ENCODE measurements at regions of chr10 and their contacts with region 1.

Region 1: GRCh38 chr10:84333864-84334451 is 5.6 kb downstream of the CCSER2 start:
- DNase-seq: peak; percentile 61 to 93
- ATAC-seq: peak; percentile 73 to 88 (median 79)
- H3K4me3 ChIP-seq: no peak overlapping the region
- H3K4me3 Mint-ChIP-seq: peak overlapping the region; percentile 72
- H3K27ac ChIP-seq: peak overlapping the region; percentile 90
- H3K27ac Mint-ChIP-seq: peak overlapping the region in 1 of 2 donors; percentile 92
- H3K4me1 ChIP-seq: peaks cover 40% of the 10 kb centered on the region
- H3K4me1 Mint-ChIP-seq: peaks cover 36 to 50% of the 10 kb centered on the region in 2 donors
- H3K27me3 ChIP-seq: no peaks in the 10 kb centered on the region
- H3K27me3 Mint-ChIP-seq: no peaks in the 10 kb centered on the region
- CTCF ChIP-seq: no peak

Region 2: GRCh38 chr10:84139126-84140035 is 194.6 kb before region 1 on chr10 and contains the start of gene GHITM:
- intact Hi-C with region 1: loop called (anchors 2 kb)
- DNase-seq: peak; percentile 99 to 100
- ATAC-seq: peak; percentile 91 to 98 (median 93)
- H3K4me3 ChIP-seq: peak within 1 kb of the TSS; percentile 81
- H3K4me3 Mint-ChIP-seq: peak within 1 kb of the TSS; percentile 95
- H3K27ac ChIP-seq: peak within 1 kb of the TSS; percentile 94
- H3K27ac Mint-ChIP-seq: peak within 1 kb of the TSS; percentile 98
- H3K4me1 ChIP-seq: peaks cover 13% of the 10 kb centered on the region
- H3K4me1 Mint-ChIP-seq: peaks cover 31 to 32% of the 10 kb centered on the region in 2 donors
- H3K27me3 ChIP-seq: no peaks in the 10 kb centered on the region
- H3K27me3 Mint-ChIP-seq: peaks cover 14 to 16% of the 10 kb centered on the region in 2 donors
- CTCF ChIP-seq: peak; percentile 37
- total RNA-seq, gene GHITM: 84.3 to 89.3 (median 87.9) TPM

Region 3: DNA sequence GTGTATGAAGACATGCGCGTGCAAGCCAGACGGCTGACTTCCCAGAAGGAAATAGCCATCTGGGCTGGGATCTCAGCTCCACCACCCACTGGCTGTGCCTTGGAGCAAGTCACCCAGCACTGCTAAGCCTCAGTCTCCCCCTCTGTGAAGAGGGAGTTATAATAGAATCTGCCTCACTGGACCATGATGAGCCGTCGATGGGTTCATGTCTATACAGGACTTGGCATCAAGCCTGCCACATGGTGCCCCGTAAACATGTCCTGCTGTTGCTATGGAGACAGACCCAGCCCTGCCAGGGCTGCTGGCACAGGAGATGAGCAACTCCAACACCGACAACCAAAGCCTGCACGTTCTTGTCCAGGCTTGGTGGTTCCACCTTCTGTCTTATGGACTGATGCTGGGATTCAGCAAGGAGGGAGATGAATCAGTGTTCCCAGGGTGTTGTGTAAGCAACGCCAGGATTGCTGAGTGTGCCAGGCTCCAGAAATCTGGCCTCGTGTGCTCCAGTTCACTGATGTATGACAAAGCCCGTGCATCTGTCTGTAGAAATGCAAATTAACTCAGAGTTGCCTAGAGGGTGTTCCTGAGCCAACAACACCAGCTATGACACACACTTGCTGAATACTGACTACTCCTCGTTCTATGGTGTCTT is 154.8 kb before region 1 on chr10:
- intact Hi-C with region 1: loop called (anchors 5 kb)
- DNase-seq: peak; percentile 22 to 67
- ATAC-seq: peak in 2 of 3 donors; percentile 38 to 41
- H3K4me3 ChIP-seq: no peak overlapping the region
- H3K4me3 Mint-ChIP-seq: no peak overlapping the region
- H3K27ac ChIP-seq: peak overlapping the region; percentile 67
- H3K27ac Mint-ChIP-seq: no peak overlapping the region
- H3K4me1 ChIP-seq: peaks cover 46% of the 10 kb centered on the region
- H3K4me1 Mint-ChIP-seq: peaks cover 0 to 7% of the 10 kb centered on the region in 2 donors
- H3K27me3 ChIP-seq: no peaks in the 10 kb centered on the region
- H3K27me3 Mint-ChIP-seq: no peaks in the 10 kb centered on the region
- CTCF ChIP-seq: no peak

Region 4: DNA sequence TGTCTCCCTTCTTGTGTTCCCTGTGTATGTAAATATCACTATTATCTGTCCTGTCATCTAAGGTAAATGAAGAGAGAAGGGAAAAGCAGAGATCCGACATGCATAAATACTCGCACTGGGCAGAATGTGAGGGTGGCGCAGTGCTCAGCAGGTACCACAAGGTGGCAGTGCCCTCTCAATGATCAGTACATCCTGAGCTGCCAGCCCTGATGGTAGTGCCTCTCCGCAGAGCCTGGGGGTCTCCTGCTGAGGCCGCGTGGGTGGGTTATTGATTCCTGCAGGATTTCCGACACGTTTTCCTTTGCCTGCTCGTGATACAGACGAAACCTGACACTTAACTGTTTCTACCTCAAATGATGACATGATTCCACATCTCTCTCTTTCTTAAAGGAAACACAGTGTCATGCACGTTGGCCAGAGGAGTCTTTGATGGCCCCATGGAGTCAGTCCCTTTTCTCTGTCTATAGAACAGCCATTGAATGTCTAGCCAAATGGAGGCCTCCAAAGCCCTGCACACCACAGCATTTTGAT is 69.3 kb before region 1 on chr10:
- intact Hi-C with region 1: loop called (anchors 5 kb)
- DNase-seq: peak; percentile 62 to 85
- ATAC-seq: peak; percentile 84 to 98 (median 96)
- H3K4me3 ChIP-seq: no peak overlapping the region
- H3K4me3 Mint-ChIP-seq: no peak overlapping the region
- H3K27ac ChIP-seq: no peak overlapping the region
- H3K27ac Mint-ChIP-seq: no peak overlapping the region
- H3K4me1 ChIP-seq: peaks cover 5% of the 10 kb centered on the region
- H3K4me1 Mint-ChIP-seq: peaks cover 12 to 16% of the 10 kb centered on the region in 2 donors
- H3K27me3 ChIP-seq: no peaks in the 10 kb centered on the region
- H3K27me3 Mint-ChIP-seq: peaks cover 25 to 33% of the 10 kb centered on the region in 2 donors
- CTCF ChIP-seq: peak; percentile 97

Region 5: GRCh38 chr10:84291384-84291783 is 42.6 kb before region 1 on chr10:
- intact Hi-C with region 1: no loop called
- DNase-seq: no peak
- ATAC-seq: peak in 1 of 3 donors; percentile 26
- H3K4me3 ChIP-seq: no peak overlapping the region
- H3K4me3 Mint-ChIP-seq: no peak overlapping the region
- H3K27ac ChIP-seq: no peak overlapping the region
- H3K27ac Mint-ChIP-seq: no peak overlapping the region
- H3K4me1 ChIP-seq: no peaks in the 10 kb centered on the region
- H3K4me1 Mint-ChIP-seq: no peaks in the 10 kb centered on the region
- H3K27me3 ChIP-seq: no peaks in the 10 kb centered on the region
- H3K27me3 Mint-ChIP-seq: peaks cover 11 to 13% of the 10 kb centered on the region in 2 donors
- CTCF ChIP-seq: no peak

Region 6: DNA sequence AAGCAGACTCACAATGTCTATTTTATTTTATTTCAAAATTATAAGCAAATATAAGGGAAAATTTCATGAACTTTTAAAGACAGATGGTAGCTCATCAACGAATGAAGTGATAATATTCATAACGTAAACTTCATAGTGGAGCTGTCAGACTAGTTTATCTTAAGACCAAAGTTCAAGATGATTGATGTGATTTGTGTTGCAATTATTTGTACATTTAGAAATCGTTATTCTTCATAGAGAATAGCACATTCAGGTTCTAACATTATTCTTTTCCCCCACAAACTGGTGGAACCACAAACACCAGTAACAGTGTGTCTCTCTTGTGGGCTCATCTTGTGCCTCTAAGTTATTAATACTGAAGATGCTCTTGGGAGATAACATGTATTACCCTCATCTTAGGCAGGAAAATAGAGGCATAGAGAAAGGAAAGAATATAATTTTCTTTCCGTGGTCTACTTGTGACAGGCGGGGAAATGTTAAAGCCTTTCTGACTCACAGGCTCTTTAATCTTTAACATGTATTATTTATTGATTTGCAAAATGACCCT is 31.4 kb after region 1 on chr10:
- intact Hi-C with region 1: loop called (anchors 5 kb)
- DNase-seq: no peak
- ATAC-seq: peak; percentile 60 to 74 (median 65)
- H3K4me3 ChIP-seq: no peak overlapping the region
- H3K4me3 Mint-ChIP-seq: no peak overlapping the region
- H3K27ac ChIP-seq: no peak overlapping the region
- H3K27ac Mint-ChIP-seq: peak overlapping the region; percentile 5 to 24
- H3K4me1 ChIP-seq: peaks cover 8% of the 10 kb centered on the region
- H3K4me1 Mint-ChIP-seq: peaks cover 71 to 78% of the 10 kb centered on the region in 2 donors
- H3K27me3 ChIP-seq: no peaks in the 10 kb centered on the region
- H3K27me3 Mint-ChIP-seq: no peaks in the 10 kb centered on the region
- CTCF ChIP-seq: no peak